GM23248 (cell line): ENCODE measurements at regions of chr2 and their contacts with region 1.

Region 1: GRCh38 chr2:69565431-69565839 is 78.1 kb downstream of the AAK1 start:
- DNase-seq: peak; percentile 47
- H3K4me3 ChIP-seq: no peak overlapping the region
- H3K27ac ChIP-seq: no peak overlapping the region
- H3K4me1 ChIP-seq: peaks cover 40% of the 10 kb centered on the region
- H3K27me3 ChIP-seq: no peaks in the 10 kb centered on the region

Region 2: DNA sequence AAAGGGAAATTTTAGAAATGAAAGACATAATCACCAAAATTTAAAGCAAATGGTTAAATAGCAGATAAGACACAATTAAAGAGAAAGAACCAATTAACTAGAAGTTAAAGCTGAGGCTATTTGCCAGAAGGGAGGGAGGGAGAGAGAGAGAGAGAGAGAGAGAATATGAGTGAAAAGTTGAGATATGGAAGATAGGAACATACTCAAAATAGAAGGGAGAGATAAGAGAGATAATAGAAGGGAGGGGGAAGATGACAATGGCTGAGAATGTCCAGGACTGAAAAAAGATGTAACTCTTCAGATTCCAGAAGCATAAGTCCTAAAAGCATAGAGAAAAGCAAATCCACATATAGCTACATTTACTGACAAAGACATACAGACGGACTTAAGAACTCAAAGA is 95.2 kb after region 1 on chr2:
- in situ Hi-C with region 1: no loop called
- DNase-seq: no peak
- H3K4me3 ChIP-seq: no peak overlapping the region
- H3K27ac ChIP-seq: no peak overlapping the region
- H3K4me1 ChIP-seq: no peaks in the 10 kb centered on the region
- H3K27me3 ChIP-seq: no peaks in the 10 kb centered on the region

Region 3: DNA sequence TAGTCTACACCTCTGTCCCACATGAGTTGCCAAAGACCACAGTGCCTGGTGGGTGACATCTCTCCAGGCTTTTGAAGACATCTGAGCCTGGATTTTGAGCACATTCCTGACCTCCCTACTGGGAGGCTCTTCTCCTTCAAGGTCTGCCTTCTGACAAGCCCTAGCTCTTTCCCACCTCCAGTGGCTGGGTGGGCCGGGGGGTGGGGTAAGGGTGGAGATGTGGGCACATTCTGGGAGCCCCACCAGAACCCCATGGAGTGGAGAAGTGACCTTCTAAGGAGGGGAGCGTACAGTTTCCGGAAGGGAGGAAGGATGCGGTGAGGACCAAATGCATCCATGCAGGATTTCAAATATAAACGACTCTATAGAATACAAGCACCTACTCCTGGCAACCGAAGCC is 148.6 kb after region 1 on chr2:
- in situ Hi-C with region 1: loop called (anchors 5 kb)
- DNase-seq: no peak
- H3K4me3 ChIP-seq: no peak overlapping the region
- H3K27ac ChIP-seq: no peak overlapping the region
- H3K4me1 ChIP-seq: peaks cover 9% of the 10 kb centered on the region
- H3K27me3 ChIP-seq: no peaks in the 10 kb centered on the region